ENCODE measurements at regions of chr6 and their contacts with region 1.

Region 1: DNA sequence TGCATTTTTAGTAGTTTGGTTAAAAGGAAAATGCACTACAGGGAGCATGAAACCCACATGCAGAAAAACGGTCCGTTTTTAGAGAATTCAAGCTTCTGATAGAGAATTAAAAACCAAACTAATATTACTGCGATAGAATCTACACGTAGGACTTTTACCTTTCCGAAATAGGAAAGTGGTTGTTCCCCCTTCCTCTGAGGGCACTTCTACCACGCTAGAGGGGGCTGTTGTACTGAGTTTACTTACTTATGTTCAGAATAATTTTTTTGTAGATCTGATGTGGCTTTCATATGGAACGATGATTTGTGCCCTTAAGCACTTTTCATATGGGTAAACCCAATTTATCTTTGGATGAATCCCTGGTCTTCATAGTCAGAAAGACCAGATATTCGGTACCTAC is 264.3 kb upstream of the PLN start:
- DNase-seq: peak; percentile 62
- H3K4me3 ChIP-seq: no peak overlapping the region
- H3K27ac ChIP-seq: no peak overlapping the region
- H3K4me1 ChIP-seq: no peaks in the 10 kb centered on the region
- H3K27me3 ChIP-seq: no peaks in the 10 kb centered on the region
- CTCF ChIP-seq: peak; percentile 49 to 68 (median 67)
- POLR2A ChIP-seq: no peak

Region 2: DNA sequence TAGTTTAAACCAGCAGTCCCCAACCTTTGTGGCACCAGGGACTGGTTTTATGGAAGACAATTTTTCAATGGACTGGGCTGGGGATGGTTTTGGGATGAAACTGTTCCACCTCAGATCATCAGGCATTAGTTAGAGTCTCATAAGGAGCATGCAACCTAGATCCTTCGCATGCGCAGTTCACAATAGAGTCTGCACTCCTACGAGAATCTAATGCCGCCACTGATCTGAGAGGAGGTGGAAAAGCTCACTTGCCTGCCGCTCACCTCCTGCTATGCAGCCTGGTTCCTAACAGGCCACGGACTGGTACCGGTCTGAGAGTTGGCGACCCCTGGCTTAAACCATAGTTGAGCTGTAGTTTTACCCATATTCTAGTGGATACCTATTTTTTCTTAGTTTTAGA is 222.1 kb before region 1 on chr6:
- intact Hi-C with region 1: no loop called
- DNase-seq: no peak
- H3K4me3 ChIP-seq: no peak overlapping the region
- H3K27ac ChIP-seq: no peak overlapping the region
- H3K4me1 ChIP-seq: no peaks in the 10 kb centered on the region
- H3K27me3 ChIP-seq: no peaks in the 10 kb centered on the region
- CTCF ChIP-seq: no peak
- POLR2A ChIP-seq: no peak

Region 3: GRCh38 chr6:118800394-118801071 is 516.8 kb after region 1 on chr6:
- intact Hi-C with region 1: loop called (anchors 10 kb)
- DNase-seq: peak; percentile 96
- H3K4me3 ChIP-seq: no peak overlapping the region
- H3K27ac ChIP-seq: no peak overlapping the region
- H3K4me1 ChIP-seq: no peaks in the 10 kb centered on the region
- H3K27me3 ChIP-seq: no peaks in the 10 kb centered on the region
- CTCF ChIP-seq: peak; percentile 80 to 91 (median 89)
- POLR2A ChIP-seq: no peak

Measured in testis (tissue), 5 donors.